ENCODE measurements at regions of chr14 and their contacts with region 1.

Region 1: DNA sequence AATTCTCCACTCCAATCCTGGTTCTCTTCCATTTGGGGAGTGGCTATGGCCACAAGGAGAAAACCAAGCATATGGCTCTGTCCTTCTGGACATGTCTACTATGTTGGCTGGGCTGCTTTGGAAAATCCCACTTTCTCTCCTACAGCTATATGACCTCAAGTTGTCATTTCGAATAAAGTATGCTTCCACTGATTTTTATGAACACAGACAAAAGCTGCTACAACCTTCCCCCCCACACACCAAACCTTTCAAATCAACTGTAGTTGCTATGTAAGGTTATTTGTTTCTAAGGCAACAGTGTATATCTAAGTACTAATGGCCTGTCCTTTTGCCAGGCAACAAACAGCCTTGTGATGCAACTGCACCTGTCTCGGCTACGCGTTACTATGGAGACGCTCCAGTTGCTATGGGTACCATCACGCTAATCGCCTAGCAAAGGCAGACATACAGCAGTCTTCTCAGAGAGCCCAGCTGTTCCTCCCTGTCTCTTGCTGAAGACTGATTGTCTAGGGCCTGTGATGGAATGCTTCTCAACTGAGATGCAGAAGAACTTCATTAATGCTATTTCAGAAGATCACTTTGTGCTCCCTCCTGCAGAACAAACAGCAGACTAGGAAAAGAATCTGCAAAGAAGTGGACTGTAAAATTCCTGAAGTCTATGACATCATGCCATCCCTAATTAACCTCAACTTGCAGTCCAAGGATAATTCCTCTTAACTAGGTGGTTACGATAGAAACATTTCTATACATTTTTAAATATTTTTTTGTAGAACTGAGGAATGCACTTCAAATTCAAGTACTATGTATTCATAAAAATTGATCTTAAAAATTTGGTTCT is 67.6 kb downstream of the FOXN3 start:
- DNase-seq: no peak
- H3K4me3 ChIP-seq: no peak overlapping the region
- H3K27ac ChIP-seq: no peak overlapping the region
- H3K4me1 ChIP-seq: peaks cover 11 to 16% of the 10 kb centered on the region in 2 donors
- H3K27me3 ChIP-seq: no peaks in the 10 kb centered on the region
- CTCF ChIP-seq: no peak
- POLR2A ChIP-seq: no peak

Region 2: DNA sequence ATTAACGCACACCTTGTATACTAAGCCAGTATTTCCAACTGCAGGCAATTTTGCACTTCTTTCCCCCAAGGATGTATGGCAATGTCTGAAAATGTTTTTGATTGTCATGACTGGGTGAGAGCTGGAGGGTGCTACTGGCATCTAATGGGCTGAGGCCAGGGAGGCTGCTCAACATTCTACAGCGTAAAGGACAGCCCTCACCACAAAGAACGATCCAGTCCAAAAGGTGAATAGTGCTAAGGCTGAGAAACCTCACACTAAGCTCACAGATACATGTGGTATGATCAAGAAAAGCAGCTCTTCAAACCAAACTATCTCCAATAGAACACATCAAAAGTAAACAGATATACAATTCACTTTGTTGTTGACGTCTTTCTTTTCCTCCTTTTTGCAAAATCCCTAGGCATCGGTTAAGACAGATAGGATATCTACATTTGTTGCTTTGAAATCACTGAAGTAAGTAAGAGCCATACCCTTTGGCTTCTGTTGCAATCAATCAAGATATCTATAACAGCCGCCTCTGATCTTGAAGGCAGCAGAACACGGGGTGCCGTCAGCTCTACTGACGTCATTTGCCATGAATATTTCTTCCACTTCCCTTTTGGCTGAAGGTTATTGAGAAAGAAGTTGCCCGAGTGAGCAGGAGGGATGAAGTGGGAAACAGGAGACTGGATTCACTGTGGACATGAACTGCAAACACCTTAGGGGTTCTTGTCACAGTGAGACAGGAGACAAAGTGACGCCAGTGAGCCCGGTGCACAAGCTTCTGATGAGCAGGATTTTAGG is 150.7 kb before region 1 on chr14:
- intact Hi-C with region 1: no loop called
- DNase-seq: no peak
- H3K4me3 ChIP-seq: no peak overlapping the region
- H3K27ac ChIP-seq: no peak overlapping the region
- H3K4me1 ChIP-seq: no peaks in the 10 kb centered on the region
- H3K27me3 ChIP-seq: no peaks in the 10 kb centered on the region
- CTCF ChIP-seq: no peak
- POLR2A ChIP-seq: no peak

Region 3: GRCh38 chr14:89252887-89253547 is 96.4 kb before region 1 on chr14:
- intact Hi-C with region 1: no loop called
- DNase-seq: peak; percentile 42 to 58
- H3K4me3 ChIP-seq: no peak overlapping the region
- H3K27ac ChIP-seq: no peak overlapping the region
- H3K4me1 ChIP-seq: peaks cover 18 to 21% of the 10 kb centered on the region in 2 donors
- H3K27me3 ChIP-seq: no peaks in the 10 kb centered on the region
- CTCF ChIP-seq: peak in 3 of 6 experiments; percentile 20 to 45 (median 33)
- POLR2A ChIP-seq: no peak

Region 4: DNA sequence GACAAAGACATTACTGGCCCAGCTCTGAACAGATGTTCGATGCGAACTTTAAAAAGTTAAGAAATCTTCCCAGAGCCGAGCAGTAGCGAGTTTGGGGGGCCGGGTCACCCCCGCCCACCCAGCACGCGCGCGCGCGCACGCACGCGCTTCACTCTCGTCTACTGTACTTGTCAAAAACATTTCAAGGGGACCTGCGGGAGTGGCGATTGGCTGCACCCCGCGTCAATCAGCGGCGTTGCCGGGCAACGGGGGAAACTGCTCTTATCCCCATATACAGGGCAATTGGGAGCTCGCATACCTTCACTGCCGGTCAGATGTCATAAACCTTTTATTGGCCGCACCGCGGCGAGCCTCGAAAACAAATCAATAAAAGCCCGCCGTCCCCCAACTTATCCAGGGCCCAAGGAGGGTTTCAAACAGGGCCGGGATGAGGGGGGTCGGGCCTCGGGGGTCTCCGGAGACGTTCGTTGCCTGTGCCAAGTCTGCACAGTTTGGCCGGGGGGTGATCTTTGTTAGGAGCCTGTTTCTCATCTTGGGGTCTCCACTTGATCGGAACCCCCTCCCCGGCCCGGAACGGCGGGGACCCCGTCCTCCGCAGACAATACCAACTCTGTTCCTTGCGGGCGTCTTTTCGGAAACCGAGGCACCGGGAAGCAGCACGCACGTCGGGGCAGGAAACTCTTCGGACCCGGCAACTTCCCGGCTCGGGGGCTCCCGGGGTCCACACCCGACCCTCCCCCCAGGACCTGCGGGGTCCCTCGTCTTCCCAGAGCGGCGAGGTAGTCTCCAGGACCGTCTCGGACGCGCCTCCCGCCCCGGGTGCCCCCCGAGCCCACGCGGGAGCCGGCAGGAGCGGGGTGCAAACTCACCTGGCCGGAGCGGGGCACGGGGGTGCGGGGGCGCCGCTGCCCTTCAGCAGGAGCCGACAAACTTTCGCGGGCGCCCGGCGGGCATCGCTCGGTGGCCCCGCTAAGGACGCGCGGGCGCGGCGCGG is 66.9 kb after region 1 on chr14:
- intact Hi-C with region 1: loop called (anchors 10 kb)
- DNase-seq: peak; percentile 97 to 98
- H3K4me3 ChIP-seq: peak overlapping the region; percentile 54 to 94 (median 60)
- H3K27ac ChIP-seq: peak overlapping the region; percentile 82 to 97 (median 94)
- H3K4me1 ChIP-seq: peaks cover 6 to 16% of the 10 kb centered on the region in 2 donors
- H3K27me3 ChIP-seq: no peaks in the 10 kb centered on the region
- CTCF ChIP-seq: peak in 1 of 6 experiments; percentile 4
- POLR2A ChIP-seq: peak in 1 of 2 donors; percentile 77

Region 5: GRCh38 chr14:90003908-90004307 is 654.5 kb after region 1 on chr14:
- intact Hi-C with region 1: no loop called
- DNase-seq: no peak
- H3K4me3 ChIP-seq: no peak overlapping the region
- H3K27ac ChIP-seq: no peak overlapping the region
- H3K4me1 ChIP-seq: no peaks in the 10 kb centered on the region
- H3K27me3 ChIP-seq: no peaks in the 10 kb centered on the region
- CTCF ChIP-seq: no peak
- POLR2A ChIP-seq: no peak

Measured in thyroid gland (tissue), 4 donors.